ENCODE measurements at regions of chr4 and their contacts with region 1.

Region 1: DNA sequence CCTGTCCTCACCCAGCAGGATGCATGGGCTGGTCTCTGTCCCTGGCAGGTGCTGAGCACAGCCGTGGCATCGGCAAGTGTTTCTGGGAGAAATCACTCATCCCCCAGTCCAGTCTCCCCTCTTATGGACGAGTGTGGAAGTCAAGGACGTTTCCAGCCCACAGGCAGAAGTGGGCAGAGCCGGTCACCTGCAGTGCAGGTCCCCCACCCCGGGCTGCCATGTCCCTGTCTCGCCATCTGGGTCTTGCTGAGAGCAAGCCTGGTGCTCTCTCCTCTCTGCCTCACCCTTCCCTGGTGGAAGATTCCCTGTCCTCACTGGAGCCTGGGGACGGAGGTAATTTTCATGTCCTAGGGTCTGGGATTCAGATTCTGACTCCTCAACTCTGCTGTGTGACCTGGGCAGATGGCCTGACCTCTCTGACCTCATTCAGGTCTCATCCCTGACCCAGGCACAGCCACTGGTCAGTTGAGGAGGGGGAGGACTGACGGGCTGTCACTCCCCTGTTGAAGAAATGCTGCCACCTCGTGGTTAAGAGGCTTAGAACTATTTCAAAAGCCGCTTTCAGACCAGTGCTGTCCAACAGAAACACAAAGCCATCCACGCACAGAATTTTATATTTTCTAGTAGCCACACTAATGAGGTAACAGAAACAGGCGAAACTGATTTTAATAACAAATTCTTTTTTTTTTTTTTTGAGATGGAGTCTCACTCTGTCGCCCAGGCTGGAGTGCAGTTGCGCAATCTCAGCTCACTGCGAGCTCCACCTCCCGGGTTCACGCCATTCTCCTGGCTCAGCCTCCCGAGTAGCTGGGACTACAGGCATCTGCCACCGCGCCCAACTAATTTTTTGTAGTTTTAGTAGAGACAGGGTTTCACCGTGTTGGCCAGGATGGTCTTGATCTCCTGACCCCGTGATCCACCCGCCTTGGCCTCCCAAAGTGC is 1.8 kb downstream of the CPZ start:
- DNase-seq: peak in 4 of 5 donors; percentile 33 to 50 (median 47)
- ATAC-seq: peak in 3 of 4 donors; percentile 30 to 74 (median 66)
- H3K4me3 ChIP-seq: no peak overlapping the region
- H3K27ac ChIP-seq: no peak overlapping the region
- H3K4me1 ChIP-seq: peaks cover 0 to 12% (median 0%) of the 10 kb centered on the region in 12 donors
- H3K27me3 ChIP-seq: peaks cover 7 to 45% (median 34%) of the 10 kb centered on the region in 9 donors
- CTCF ChIP-seq: peak; percentile 52 to 75 (median 68)
- POLR2A ChIP-seq: no peak

Region 2: DNA sequence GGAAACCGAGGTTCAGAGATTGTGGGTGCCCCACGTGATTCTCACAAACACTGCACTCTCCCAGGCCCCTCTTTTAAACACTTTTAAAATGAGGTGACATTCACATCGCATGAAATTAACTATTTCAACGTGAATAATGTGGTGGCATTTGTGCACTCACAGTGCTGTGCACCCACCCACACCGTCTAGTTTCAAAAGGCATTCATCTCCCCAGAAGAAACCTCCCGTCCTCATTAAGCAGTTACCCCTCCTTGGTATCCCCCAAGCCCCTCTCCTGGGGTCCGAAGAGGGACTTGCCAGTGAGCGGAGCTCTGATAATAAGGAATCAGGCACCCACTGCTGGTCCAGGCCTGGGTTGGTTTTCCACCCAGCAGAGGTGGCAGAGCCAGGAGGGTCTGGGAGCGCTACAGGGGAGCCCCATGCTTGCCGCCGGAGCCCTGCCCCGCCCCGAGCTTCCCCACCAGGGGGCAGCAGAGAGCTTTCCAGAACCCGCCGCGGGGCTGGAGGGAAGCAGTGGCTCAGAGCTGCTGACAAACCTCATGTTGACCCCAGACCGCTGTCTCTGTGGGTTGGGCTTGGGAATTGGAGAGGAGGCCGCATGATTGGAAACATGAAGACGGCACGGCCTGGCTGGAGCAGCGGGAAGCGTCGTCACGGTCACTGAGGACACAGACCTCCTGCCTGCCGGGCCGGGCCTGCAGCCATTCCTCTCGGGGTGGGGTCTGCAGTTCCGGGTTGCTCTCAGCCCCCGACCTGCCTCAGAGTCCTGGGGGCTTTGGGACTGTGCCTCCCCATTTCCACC is 352.3 kb before region 1 on chr4:
- intact Hi-C with region 1: loop called in 9 of 10 experiments (anchors 5 to 10 kb)
- DNase-seq: peak; percentile 87 to 93 (median 88)
- ATAC-seq: peak; percentile 75 to 91 (median 86)
- H3K4me3 ChIP-seq: no peak overlapping the region
- H3K27ac ChIP-seq: peak overlapping the region in 7 of 12 donors; percentile 9 to 63 (median 47)
- H3K4me1 ChIP-seq: peaks cover 0 to 21% (median 15%) of the 10 kb centered on the region in 12 donors
- H3K27me3 ChIP-seq: no peaks in the 10 kb centered on the region
- CTCF ChIP-seq: peak; percentile 97 to 100 (median 98)
- POLR2A ChIP-seq: no peak

Region 3: GRCh38 chr4:8468746-8469535 is 125.4 kb before region 1 on chr4:
- intact Hi-C with region 1: loop called (anchors 1 to 5 kb)
- DNase-seq: peak; percentile 38 to 85 (median 60)
- ATAC-seq: peak in 3 of 4 donors; percentile 57 to 69 (median 66)
- H3K4me3 ChIP-seq: no peak overlapping the region
- H3K27ac ChIP-seq: no peak overlapping the region
- H3K4me1 ChIP-seq: peaks cover 0 to 21% (median 2%) of the 10 kb centered on the region in 12 donors
- H3K27me3 ChIP-seq: no peaks in the 10 kb centered on the region
- CTCF ChIP-seq: peak; percentile 81 to 94 (median 90)
- POLR2A ChIP-seq: no peak

Measured in heart left ventricle (tissue), 16 donors.